Activated CD8-positive, alpha-beta T cell treated with anti-CD3 and anti-CD28 coated beads, Interleukin-2, amount 10 ng/mL, durations not matched to agents 7 days and 5 days (primary cell): ENCODE measurements at regions of chr1 and their contacts with region 1.

Region 1: GRCh38 chr1:200620273-200621131 is at the start of gene KIF14:
- DNase-seq: peak; percentile 98
- ATAC-seq: peak; percentile 98
- H3K4me3 Mint-ChIP-seq: peak within 1 kb of the TSS; percentile 92
- H3K27ac Mint-ChIP-seq: peak within 1 kb of the TSS; percentile 92
- H3K4me1 Mint-ChIP-seq: peaks cover 57% of the 10 kb centered on the region
- H3K27me3 Mint-ChIP-seq: no peaks in the 10 kb centered on the region
- total RNA-seq, gene KIF14: 34.1 to 35.8 TPM

Region 2: DNA sequence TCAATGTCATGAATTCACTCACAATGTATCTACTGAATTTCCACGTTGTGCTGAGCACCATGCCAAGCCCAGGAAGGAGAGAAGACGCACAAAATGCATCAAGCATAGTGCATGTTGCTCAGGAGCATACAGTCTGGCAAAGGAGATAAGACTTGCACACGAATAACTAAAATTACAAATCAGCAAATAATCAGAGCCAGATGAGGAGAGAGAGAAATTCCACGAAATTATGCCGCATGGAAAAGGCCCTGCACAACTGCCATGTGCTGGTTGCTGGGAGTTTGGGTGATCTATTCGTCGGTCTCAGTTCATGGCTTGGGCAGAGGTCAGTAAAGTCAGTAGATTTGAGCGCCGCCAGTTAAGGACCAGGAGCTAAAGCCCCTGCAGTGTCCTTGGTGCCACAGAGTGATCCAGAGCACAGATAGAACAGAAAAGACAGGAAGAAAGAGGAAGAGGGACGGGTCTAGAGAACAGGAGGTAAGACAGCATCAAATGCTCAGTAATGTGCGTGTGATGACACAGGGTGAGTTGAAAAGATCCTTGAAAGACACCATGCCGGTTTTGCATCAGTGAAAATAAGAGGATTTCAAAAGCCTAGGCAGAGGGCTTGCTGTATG is 155.6 kb before region 1 on chr1:
- CTCF ChIA-PET with region 1: no interaction called
- POLR2A ChIA-PET with region 1: no interaction called
- DNase-seq: no peak
- ATAC-seq: no peak
- H3K4me3 Mint-ChIP-seq: no peak overlapping the region
- H3K27ac Mint-ChIP-seq: no peak overlapping the region
- H3K4me1 Mint-ChIP-seq: no peaks in the 10 kb centered on the region
- H3K27me3 Mint-ChIP-seq: peaks cover 9% of the 10 kb centered on the region

Region 3: GRCh38 chr1:200653022-200653462 is 32.5 kb after region 1 on chr1:
- CTCF ChIA-PET with region 1: interaction called, 14 read pairs
- POLR2A ChIA-PET with region 1: no interaction called
- DNase-seq: no peak
- ATAC-seq: peak; percentile 39
- H3K4me3 Mint-ChIP-seq: no peak overlapping the region
- H3K27ac Mint-ChIP-seq: peak overlapping the region; percentile 56
- H3K4me1 Mint-ChIP-seq: peaks cover 21% of the 10 kb centered on the region
- H3K27me3 Mint-ChIP-seq: no peaks in the 10 kb centered on the region

Region 4: GRCh38 chr1:200669314-200670241 is 49.1 kb after region 1 on chr1 and contains the start of gene DDX59:
- CTCF ChIA-PET with region 1: interaction called, 51 read pairs
- POLR2A ChIA-PET with region 1: interaction called, 10 read pairs
- DNase-seq: peak; percentile 91
- ATAC-seq: peak; percentile 94
- H3K4me3 Mint-ChIP-seq: peak within 1 kb of the TSS; percentile 97
- H3K27ac Mint-ChIP-seq: peak within 1 kb of the TSS; percentile 96
- H3K4me1 Mint-ChIP-seq: peaks cover 36% of the 10 kb centered on the region
- H3K27me3 Mint-ChIP-seq: no peaks in the 10 kb centered on the region
- total RNA-seq, gene DDX59: 24.1 to 27.8 TPM

Region 5: GRCh38 chr1:200802865-200803512 is 182.5 kb after region 1 on chr1:
- CTCF ChIA-PET with region 1: interaction called, 99 read pairs
- POLR2A ChIA-PET with region 1: no interaction called
- DNase-seq: peak; percentile 82
- ATAC-seq: peak; percentile 91
- H3K4me3 Mint-ChIP-seq: no peak overlapping the region
- H3K27ac Mint-ChIP-seq: no peak overlapping the region
- H3K4me1 Mint-ChIP-seq: no peaks in the 10 kb centered on the region
- H3K27me3 Mint-ChIP-seq: peaks cover 24% of the 10 kb centered on the region

Region 6: DNA sequence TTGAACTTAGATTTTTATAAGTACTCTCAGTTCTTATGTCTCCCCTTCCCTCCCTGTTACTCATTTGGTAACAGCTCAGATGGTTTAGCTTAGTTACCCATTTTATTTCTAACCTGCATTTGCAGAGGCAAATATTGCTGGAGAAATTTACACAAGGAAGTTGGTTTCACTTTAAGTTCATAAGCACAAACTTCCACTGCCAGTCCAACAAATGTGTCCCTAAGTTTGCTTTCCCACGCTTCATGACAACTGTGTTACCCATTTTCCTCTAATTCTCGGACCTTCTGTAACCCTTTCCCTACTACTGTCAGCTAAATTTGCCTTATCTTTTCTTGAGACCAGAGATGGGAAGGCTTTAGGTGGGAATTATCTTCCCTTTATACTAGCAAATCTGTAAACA is 188.3 kb after region 1 on chr1:
- CTCF ChIA-PET with region 1: interaction called, 99 read pairs
- POLR2A ChIA-PET with region 1: no interaction called
- DNase-seq: no peak
- ATAC-seq: no peak
- H3K4me3 Mint-ChIP-seq: no peak overlapping the region
- H3K27ac Mint-ChIP-seq: no peak overlapping the region
- H3K4me1 Mint-ChIP-seq: no peaks in the 10 kb centered on the region
- H3K27me3 Mint-ChIP-seq: peaks cover 13% of the 10 kb centered on the region

Region 7: GRCh38 chr1:201119206-201120197 is 499.0 kb after region 1 on chr1:
- CTCF ChIA-PET with region 1: interaction called, 10 read pairs
- POLR2A ChIA-PET with region 1: interaction called, 3 read pairs
- DNase-seq: peak; percentile 66
- ATAC-seq: no peak
- H3K4me3 Mint-ChIP-seq: no peak overlapping the region
- H3K27ac Mint-ChIP-seq: no peak overlapping the region
- H3K4me1 Mint-ChIP-seq: peaks cover 7% of the 10 kb centered on the region
- H3K27me3 Mint-ChIP-seq: peaks cover 15% of the 10 kb centered on the region